Activated CD8-positive, alpha-beta T cell treated with anti-CD3 and anti-CD28 coated beads for 36 hours (primary cell): ENCODE measurements at regions of chr10 and their contacts with region 1.

Region 1: DNA sequence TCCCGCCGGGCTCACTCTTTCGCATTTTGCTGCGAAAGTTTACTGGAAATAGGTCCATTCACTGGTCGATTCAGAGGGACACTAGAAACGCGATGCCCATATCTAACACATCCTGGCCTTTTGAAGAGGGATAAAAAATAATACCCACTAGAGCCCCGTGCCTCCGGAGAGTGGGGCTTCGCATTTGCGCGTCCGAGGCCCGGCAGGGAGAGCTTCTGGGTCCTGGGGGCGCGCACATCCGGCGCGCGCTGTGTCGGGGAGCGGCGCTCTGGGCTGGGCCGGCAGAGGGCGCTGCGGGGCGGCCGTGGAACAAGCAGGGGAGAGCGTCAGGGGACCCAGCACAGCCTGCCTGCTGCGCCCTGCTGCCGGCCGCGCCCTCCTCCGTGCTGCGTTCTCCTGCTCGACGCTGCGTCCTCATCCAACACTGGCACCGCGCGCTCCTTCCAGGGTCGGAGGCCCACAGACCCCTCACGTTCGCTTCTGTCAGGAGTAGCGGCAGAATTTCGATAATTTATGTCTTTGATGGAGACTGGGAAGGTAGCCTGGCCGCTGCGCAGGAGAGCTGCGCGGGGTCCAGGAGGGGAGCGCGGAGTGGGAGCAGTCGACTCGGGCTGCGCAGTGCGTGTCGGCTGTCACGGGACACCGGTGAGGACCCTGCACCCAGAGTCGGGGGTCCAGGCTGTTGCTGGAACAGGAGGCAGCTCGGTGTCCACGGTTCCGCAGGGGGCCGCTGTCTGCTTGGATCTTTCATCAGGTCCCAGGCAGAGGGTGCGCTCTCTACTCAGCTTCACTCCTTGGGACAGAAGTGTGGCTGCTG is 41.5 kb upstream of the ZNF32 start:
- DNase-seq: peak; percentile 87
- ATAC-seq: peak; percentile 99
- H3K4me3 Mint-ChIP-seq: peak overlapping the region; percentile 75
- H3K27ac Mint-ChIP-seq: peak overlapping the region; percentile 50
- H3K4me1 Mint-ChIP-seq: peaks cover 2% of the 10 kb centered on the region
- H3K27me3 Mint-ChIP-seq: peaks cover 19% of the 10 kb centered on the region
- CTCF ChIP-seq: peak; percentile 90

Region 2: GRCh38 chr10:43846187-43846680 is 156.1 kb after region 1 on chr10:
- CTCF ChIA-PET with region 1: no interaction called
- POLR2A ChIA-PET with region 1: no interaction called
- intact Hi-C with region 1: no loop called
- DNase-seq: peak; percentile 52
- ATAC-seq: peak; percentile 76
- H3K4me3 Mint-ChIP-seq: peak overlapping the region; percentile 44
- H3K27ac Mint-ChIP-seq: peak overlapping the region; percentile 76
- H3K4me1 Mint-ChIP-seq: peaks cover 20% of the 10 kb centered on the region
- H3K27me3 Mint-ChIP-seq: no peaks in the 10 kb centered on the region
- CTCF ChIP-seq: no peak

Region 3: GRCh38 chr10:44030143-44030542 is 340.0 kb after region 1 on chr10:
- CTCF ChIA-PET with region 1: interaction called, 14 read pairs
- POLR2A ChIA-PET with region 1: interaction called, 3 read pairs
- intact Hi-C with region 1: loop called (anchors 10 kb)
- DNase-seq: peak; percentile 53
- ATAC-seq: peak; percentile 89
- H3K4me3 Mint-ChIP-seq: no peak overlapping the region
- H3K27ac Mint-ChIP-seq: no peak overlapping the region
- H3K4me1 Mint-ChIP-seq: no peaks in the 10 kb centered on the region
- H3K27me3 Mint-ChIP-seq: peaks cover 10% of the 10 kb centered on the region
- CTCF ChIP-seq: peak; percentile 42

Region 4: DNA sequence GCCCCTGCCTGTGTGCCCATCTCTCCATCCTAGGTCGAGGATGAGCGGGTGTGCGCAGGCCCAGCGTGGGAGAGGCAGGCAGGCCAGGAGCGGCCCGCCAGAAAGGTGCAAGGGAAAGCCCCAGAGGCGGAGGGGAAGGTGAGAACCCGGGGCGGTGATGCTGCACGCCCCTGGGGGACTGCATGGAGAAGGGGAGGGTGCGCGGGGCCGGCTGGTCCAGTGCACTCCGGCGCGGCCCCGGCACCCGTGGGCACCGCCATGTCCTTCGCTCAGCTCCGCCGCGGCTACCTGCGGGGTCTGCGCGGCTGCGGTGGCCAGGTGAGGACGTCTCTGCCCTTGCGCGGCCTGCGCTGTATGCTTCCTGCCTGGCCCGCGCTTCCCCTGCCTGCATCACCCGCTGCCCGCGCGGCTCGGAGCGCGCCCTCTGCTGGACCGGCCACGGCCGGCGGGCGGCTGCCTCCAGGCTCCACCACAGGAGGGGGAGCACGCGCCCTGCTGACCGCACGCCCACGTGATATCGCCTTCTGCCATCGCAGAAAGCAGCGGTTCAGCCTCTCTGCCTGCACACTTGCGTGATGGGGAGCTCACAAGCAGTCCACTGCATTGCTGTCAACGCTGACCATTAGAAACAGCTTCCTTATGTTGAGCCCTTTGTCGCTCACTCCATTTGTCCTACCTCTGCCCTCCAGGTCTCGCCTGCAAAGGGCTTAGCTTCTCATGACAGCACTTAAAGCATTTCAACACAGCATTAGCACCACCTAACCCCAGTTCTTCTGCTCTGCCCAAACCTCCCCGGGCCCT is 620.8 kb after region 1 on chr10:
- CTCF ChIA-PET with region 1: interaction called, 3 read pairs
- POLR2A ChIA-PET with region 1: no interaction called
- intact Hi-C with region 1: loop called (anchors 10 kb)
- DNase-seq: peak; percentile 79
- ATAC-seq: peak; percentile 97
- H3K4me3 Mint-ChIP-seq: peak overlapping the region; percentile 45
- H3K27ac Mint-ChIP-seq: no peak overlapping the region
- H3K4me1 Mint-ChIP-seq: peaks cover 12% of the 10 kb centered on the region
- H3K27me3 Mint-ChIP-seq: peaks cover 17% of the 10 kb centered on the region
- CTCF ChIP-seq: peak; percentile 68